ENCODE measurements at regions of chr10 and their contacts with region 1.

Region 1: DNA sequence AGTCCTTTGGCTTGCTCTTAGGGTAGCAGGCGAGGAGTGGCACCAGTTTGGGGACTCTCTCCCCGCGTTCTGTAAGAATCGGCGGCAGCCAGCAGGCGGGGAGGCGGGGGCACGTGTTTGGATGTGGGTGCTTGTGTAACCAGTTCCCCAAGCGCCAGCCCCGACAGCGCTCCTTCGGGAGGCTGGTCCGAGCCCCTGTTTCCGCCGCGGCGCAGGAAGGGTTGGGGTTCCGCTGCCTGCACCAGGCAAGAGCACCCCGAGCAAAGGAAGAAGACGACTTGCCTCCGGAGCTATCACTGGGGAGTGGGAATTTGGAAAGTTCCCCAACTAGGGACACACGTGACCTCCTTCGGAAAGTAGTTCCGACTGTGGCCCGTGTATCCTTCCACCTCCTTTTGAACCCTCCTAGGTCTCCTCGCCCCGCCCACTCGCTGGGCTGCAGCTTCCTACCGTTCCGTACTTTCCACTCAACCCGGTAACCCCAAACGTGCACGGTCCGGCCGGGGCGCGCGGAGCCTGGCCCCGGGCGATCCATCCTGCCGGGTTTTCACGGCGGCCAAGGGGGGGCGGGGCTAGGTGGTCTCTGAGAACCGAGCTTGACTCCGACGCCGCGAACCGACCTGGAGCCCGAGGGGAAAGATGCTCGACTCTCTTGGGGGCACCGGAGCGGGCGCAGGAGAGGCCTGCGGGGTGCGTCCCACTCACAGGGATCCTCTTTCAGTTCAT is 1.2 kb downstream of the KLLN start:
- DNase-seq: peak; percentile 91
- H3K4me3 Mint-ChIP-seq: peak overlapping the region; percentile 94
- H3K27ac Mint-ChIP-seq: peak overlapping the region; percentile 92
- H3K4me1 Mint-ChIP-seq: peaks cover 52% of the 10 kb centered on the region
- H3K27me3 Mint-ChIP-seq: peaks cover 5% of the 10 kb centered on the region

Region 2: DNA sequence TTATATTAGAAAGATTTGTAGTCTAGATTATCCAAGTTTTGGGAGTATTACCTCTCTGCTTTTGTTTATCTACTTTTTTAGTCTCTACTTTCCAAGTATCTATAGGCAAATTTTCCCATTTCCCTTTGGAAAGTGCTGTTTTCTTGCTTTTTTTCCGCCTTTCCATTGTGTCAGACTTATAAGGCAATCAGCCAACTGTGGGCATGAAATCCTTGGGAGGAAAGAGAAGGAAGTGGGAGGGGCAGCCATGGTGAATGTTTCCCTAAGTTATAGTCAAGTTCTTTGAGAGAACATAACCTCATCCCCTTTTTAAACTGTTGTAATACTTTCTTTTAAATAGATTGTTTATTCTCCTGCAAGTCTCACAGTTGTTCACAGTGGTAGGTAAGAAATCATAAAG is 53.9 kb after region 1 on chr10:
- intact Hi-C with region 1: loop called (anchors 5 kb)
- DNase-seq: no peak
- H3K4me3 Mint-ChIP-seq: no peak overlapping the region
- H3K27ac Mint-ChIP-seq: no peak overlapping the region
- H3K4me1 Mint-ChIP-seq: peaks cover 44% of the 10 kb centered on the region
- H3K27me3 Mint-ChIP-seq: no peaks in the 10 kb centered on the region

Region 3: GRCh38 chr10:88117869-88118632 is 255.9 kb after region 1 on chr10:
- intact Hi-C with region 1: loop called (anchors 1 kb)
- DNase-seq: no peak
- H3K4me3 Mint-ChIP-seq: no peak overlapping the region
- H3K27ac Mint-ChIP-seq: no peak overlapping the region
- H3K4me1 Mint-ChIP-seq: peaks cover 18% of the 10 kb centered on the region
- H3K27me3 Mint-ChIP-seq: peaks cover 3% of the 10 kb centered on the region

Region 4: DNA sequence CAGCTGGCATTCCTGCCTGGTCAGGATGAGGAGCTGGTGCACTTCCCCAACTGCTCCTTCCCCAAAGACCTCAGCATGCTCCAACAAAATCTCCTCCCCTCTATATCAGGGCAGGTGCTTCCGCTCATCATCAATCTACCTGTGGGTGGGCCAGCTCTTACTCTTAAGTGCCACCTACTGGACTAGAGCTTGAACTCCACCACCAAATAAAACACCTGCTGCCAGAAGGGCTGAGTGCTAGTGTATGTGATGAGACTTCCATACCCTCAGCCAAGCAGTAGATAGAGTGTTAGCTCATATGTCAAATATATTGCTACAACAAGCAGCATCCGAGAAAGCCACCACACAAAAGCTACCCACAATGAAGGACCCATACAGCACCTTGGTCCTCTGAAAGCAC is 456.7 kb after region 1 on chr10:
- intact Hi-C with region 1: loop called (anchors 5 kb)
- DNase-seq: no peak
- H3K4me3 Mint-ChIP-seq: no peak overlapping the region
- H3K27ac Mint-ChIP-seq: no peak overlapping the region
- H3K4me1 Mint-ChIP-seq: peaks cover 3% of the 10 kb centered on the region
- H3K27me3 Mint-ChIP-seq: peaks cover 4% of the 10 kb centered on the region

Region 5: DNA sequence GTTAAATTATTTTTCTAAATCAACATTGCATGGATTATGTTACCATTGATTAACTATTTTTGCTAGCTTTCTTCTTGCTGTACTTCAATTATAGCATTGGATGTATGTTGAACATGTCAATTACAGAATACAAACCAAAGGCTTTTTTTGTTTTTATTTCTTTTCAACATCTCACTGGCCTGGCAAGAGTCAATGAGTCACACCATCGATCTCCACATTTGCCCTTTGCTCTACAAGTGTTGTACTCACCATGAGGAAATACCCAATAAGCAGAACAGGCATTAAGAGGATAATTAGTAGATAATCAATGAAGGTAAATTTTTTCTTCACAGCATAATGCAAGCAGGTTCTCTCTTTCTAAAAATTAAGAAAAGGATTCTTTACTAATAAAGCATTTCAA is 966.2 kb after region 1 on chr10:
- intact Hi-C with region 1: loop called (anchors 5 kb)
- DNase-seq: no peak
- H3K4me3 Mint-ChIP-seq: peak overlapping the region; percentile 12
- H3K27ac Mint-ChIP-seq: no peak overlapping the region
- H3K4me1 Mint-ChIP-seq: peaks cover 84% of the 10 kb centered on the region
- H3K27me3 Mint-ChIP-seq: no peaks in the 10 kb centered on the region

Region 6: DNA sequence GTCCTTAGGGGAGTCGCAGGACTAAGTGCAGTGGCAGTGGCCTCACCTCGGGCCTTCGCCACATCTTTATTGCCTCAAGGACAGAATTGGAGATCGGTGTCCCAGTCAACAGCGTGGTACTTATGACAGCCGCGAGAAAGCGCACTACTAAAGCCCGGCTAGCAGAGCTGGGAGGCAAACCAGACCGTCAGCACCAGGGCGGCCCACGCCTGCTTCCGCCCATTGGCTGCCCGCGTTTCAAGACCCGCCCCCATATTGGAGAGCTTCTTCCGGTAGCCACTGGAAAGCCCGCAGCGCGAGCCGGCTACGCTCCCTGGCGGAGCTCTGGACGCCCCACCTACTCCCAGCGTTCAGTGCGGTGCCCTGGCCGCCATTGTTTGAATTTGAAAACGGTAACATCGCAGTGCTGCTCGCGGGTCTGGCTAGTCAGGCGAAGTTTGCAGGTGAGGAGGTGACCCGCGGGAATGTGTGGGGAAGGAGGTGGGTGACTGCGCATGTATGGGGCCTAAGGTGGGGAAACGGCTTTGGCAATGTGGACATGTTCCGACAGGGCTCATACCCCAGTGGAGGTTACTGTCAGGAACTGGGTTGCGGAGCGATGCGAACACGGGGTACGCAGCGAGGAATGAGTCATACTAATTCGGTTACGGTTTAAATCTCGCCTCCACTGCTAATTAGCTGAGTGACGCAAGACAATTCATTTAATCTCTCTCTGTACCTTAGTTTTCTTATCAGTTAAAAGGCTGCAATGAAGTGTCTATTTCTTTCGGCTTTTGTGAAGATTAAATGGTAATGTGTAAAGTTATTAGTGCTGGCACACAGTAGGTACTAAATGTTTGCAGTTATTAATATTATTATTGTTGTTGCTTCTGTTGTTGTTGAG is 1839.4 kb after region 1 on chr10 and contains the start of gene KIF20B:
- intact Hi-C with region 1: loop called (anchors 5 kb)
- DNase-seq: peak; percentile 96
- H3K4me3 Mint-ChIP-seq: peak within 1 kb of the TSS; percentile 91
- H3K27ac Mint-ChIP-seq: peak within 1 kb of the TSS; percentile 95
- H3K4me1 Mint-ChIP-seq: peaks cover 63% of the 10 kb centered on the region
- H3K27me3 Mint-ChIP-seq: no peaks in the 10 kb centered on the region
- total RNA-seq, gene KIF20B: 48.7 TPM in 2 replicates

Region 7: GRCh38 chr10:89829887-89830269 is 1967.8 kb after region 1 on chr10:
- intact Hi-C with region 1: no loop called
- DNase-seq: no peak
- H3K4me3 Mint-ChIP-seq: no peak overlapping the region
- H3K27ac Mint-ChIP-seq: no peak overlapping the region
- H3K4me1 Mint-ChIP-seq: no peaks in the 10 kb centered on the region
- H3K27me3 Mint-ChIP-seq: peaks cover 17% of the 10 kb centered on the region

Measured in activated T-helper 1 cell treated with anti-CD3 and anti-CD28 coated beads, Interleukin-12 subunit alpha, Interleukin-12 subunit beta, Interleukin-2, Interleukin-4 antibody, amounts not matched to agents 30 ng/mL and 10 ng/mL and 1 ng/mL, durations not matched to agents 14 hours and 24 hours and 36 hours (primary cell).